ENCODE measurements at regions of chr14 and their contacts with region 1.

Region 1: GRCh38 chr14:99982537-99983250 is 82.5 kb upstream of the EVL start:
- DNase-seq: peak; percentile 29
- ATAC-seq: peak; percentile 90

Region 2: GRCh38 chr14:99672506-99673304 is 310.0 kb before region 1 on chr14:
- intact Hi-C with region 1: no loop called
- DNase-seq: no peak
- ATAC-seq: no peak

Region 3: DNA sequence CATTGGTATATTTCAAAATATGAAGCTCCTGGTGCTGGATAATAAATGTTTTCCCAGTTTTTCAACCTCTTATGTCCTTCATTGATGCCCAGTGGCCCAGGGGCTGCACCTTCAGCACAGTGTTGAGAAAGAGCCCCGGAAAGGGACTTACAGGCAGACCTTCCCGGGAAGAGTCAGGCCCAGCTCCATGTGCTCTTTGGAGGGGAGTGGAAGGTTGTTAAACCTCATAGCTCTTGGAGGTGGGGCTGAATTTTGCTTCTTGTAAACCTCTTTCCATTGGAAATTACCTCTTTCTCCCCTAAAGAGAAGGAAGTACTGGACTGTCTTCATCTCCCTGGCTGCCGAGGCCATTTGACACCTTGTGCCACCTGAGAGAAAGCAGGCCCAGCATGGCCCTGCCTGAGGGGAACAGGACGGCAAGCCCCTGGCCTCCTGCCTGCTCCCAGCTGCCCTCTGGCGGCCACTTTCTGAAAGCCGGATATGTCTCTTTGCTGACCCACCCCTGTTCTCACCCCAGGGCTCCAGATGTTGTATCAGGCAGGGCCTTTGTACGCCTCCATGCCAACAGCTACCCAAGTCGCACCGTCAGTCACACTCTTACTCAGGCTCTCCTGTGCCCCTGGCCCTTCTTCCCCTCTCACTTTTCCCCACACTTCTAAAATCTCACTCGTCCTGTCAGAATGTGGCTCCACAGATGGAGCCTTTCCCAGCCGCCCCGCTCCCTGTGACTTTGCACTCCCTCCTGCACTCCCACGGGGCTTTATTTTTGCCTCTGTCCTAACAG is 125.5 kb after region 1 on chr14:
- intact Hi-C with region 1: loop called (anchors 5 kb)
- DNase-seq: peak; percentile 91
- ATAC-seq: peak; percentile 87